Left cardiac atrium (tissue), 4 donors: ENCODE measurements at regions of chr1 and their contacts with region 1.

Region 1: GRCh38 chr1:10507111-10507879 is 32.5 kb downstream of the PEX14 start:
- DNase-seq: peak; percentile 55
- ATAC-seq: peak; percentile 79 to 82

Region 2: GRCh38 chr1:10873189-10873588 is 365.9 kb after region 1 on chr1:
- intact Hi-C with region 1: loop called in 1 of 2 experiments (anchors 5 kb)
- DNase-seq: no peak
- ATAC-seq: no peak

Region 3: GRCh38 chr1:10960411-10961299 is 453.4 kb after region 1 on chr1:
- intact Hi-C with region 1: loop called in 1 of 2 experiments (anchors 10 kb)
- DNase-seq: peak; percentile 82
- ATAC-seq: peak; percentile 74 to 76